ENCODE measurements at regions of chr5 and their contacts with region 1.

Region 1: DNA sequence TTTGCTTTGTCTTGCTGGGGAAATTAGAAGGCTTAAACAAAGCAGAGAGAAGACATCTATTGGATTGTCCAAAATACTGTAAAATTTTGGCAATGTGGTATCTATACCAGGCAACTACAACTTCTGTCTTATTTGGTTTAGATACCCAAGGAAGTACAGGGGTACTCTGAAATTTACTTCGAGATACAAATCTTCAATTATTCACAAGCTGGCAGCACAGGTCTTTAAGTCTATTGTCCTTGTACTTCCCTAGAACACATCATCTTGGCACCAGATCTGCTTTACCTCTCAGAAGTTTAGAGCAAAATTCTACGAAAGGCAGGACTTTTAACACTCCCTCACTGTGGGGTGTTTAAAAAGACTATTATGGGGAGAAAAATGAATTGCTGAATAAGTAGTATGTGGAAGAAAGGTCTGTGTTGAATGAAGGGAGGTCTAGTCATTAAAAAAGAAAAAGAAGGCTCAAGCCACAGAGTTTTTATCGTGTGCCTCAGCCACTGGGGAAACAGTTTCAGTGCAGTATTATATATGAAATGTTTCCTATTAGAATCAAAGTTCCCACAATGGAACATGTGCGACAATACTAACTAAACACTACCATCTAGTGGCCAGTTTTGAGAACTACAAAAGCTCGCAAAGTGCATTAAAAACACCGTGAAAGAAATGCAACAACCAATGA is 93.7 kb downstream of the PDE4D start:
- DNase-seq: no peak
- ATAC-seq: peak; percentile 60
- H3K4me3 Mint-ChIP-seq: no peak overlapping the region
- H3K27ac Mint-ChIP-seq: no peak overlapping the region
- H3K4me1 Mint-ChIP-seq: peaks cover 10% of the 10 kb centered on the region
- H3K27me3 Mint-ChIP-seq: no peaks in the 10 kb centered on the region
- CTCF ChIP-seq: peak; percentile 91

Region 2: GRCh38 chr5:58886315-58887207 is 913.2 kb before region 1 on chr5:
- CTCF ChIA-PET with region 1: interaction called, 5 read pairs
- POLR2A ChIA-PET with region 1: no interaction called
- intact Hi-C with region 1: loop called (anchors 1 kb)
- DNase-seq: peak; percentile 22
- ATAC-seq: peak; percentile 77
- H3K4me3 Mint-ChIP-seq: no peak overlapping the region
- H3K27ac Mint-ChIP-seq: no peak overlapping the region
- H3K4me1 Mint-ChIP-seq: peaks cover 7% of the 10 kb centered on the region
- H3K27me3 Mint-ChIP-seq: peaks cover 18% of the 10 kb centered on the region
- CTCF ChIP-seq: peak; percentile 98

Region 3: DNA sequence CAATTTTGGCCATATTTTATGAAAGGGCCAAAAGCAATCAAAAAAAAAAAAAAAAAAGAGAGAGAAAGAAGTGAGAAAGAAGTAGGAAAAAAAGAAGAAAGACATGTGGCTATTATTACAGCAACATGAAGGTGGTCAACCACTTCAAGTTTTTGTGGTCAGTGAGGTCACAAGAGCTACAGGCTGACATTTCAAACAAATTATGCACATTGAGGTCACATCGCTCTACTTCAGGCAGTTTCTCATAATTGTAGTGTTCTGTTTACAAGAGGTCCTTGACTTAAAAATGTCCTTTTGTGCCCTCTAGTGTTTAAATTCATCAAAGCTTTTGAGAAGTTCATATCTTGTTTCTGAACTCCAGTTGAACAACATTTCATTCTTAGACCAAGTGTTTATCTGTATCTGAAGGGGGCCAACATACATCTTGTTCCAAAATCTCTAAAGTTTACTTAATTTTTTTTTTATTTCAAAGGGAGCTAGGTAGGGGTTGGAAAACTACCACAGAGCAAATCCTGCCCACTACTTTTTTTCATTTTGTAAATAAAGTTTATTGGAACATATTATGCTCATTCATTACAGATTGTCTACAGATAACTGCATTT is 419.4 kb before region 1 on chr5:
- CTCF ChIA-PET with region 1: interaction called, 7 read pairs
- POLR2A ChIA-PET with region 1: no interaction called
- intact Hi-C with region 1: loop called (anchors 2 kb)
- DNase-seq: no peak
- ATAC-seq: peak; percentile 52
- H3K4me3 Mint-ChIP-seq: no peak overlapping the region
- H3K27ac Mint-ChIP-seq: no peak overlapping the region
- H3K4me1 Mint-ChIP-seq: peaks cover 4% of the 10 kb centered on the region
- H3K27me3 Mint-ChIP-seq: no peaks in the 10 kb centered on the region
- CTCF ChIP-seq: no peak

Region 4: GRCh38 chr5:59562756-59563389 is 236.9 kb before region 1 on chr5:
- CTCF ChIA-PET with region 1: interaction called, 6 read pairs
- POLR2A ChIA-PET with region 1: no interaction called
- intact Hi-C with region 1: loop called (anchors 1 kb)
- DNase-seq: peak; percentile 60
- ATAC-seq: peak; percentile 91
- H3K4me3 Mint-ChIP-seq: peak overlapping the region; percentile 65
- H3K27ac Mint-ChIP-seq: peak overlapping the region; percentile 91
- H3K4me1 Mint-ChIP-seq: peaks cover 81% of the 10 kb centered on the region
- H3K27me3 Mint-ChIP-seq: no peaks in the 10 kb centered on the region
- CTCF ChIP-seq: no peak

Region 5: DNA sequence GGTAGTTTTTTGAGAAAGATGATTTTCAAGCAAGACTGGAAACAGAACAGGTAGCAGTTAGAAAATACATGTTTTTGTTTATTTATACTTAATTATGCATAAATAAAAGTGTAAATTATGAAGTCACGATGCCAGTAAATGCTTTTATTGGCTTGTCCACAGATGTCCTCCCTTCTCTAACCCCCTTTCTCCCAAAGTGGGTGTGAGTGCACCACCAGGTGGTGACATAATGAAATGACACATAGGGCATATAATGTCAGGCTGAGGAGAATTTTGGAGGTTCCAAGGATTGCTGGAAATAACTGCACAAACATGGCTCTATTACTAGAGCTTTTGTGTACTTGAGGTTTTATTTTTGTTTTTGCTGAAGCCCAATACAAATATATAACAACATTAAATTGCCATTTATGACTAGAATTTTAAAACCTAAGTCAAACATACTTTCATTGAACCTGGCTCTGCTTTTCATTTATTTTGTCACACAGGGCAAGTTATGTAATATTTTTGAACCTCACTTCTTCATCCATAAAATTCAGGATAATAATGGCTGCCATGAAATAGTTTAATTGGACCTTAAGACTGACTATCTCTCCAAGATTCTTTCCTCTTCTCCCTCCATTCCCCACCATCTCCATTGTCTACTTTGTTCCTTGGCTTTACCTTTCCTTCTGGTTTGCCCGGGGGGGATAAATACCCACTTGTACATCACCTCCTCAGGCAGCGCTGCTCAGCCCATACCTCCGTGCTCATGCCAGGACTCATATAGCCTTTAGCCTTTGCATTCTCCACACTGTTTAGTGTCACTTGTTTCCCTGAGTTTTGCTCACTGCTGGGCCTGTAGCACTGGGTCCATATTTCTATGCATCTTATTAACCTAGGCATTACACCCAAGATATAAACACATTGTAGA is 75.1 kb before region 1 on chr5:
- CTCF ChIA-PET with region 1: interaction called, 6 read pairs
- POLR2A ChIA-PET with region 1: no interaction called
- intact Hi-C with region 1: loop called (anchors 1 kb)
- DNase-seq: no peak
- ATAC-seq: peak; percentile 75
- H3K4me3 Mint-ChIP-seq: no peak overlapping the region
- H3K27ac Mint-ChIP-seq: no peak overlapping the region
- H3K4me1 Mint-ChIP-seq: peaks cover 13% of the 10 kb centered on the region
- H3K27me3 Mint-ChIP-seq: no peaks in the 10 kb centered on the region
- CTCF ChIP-seq: peak; percentile 38